Activated naive CD8-positive, alpha-beta T cell treated with anti-CD3 and anti-CD28 coated beads, Interleukin-2, amount 10 ng/mL, durations not matched to agents 7 days and 5 days (primary cell): ENCODE measurements at regions of chr6 and their contacts with region 1.

Region 1: GRCh38 chr6:32952817-32953739 is at the start of gene HLA-DMA:
- DNase-seq: peak; percentile 65
- ATAC-seq: peak; percentile 93
- H3K4me3 Mint-ChIP-seq: peak within 1 kb of the TSS; percentile 66
- H3K27ac Mint-ChIP-seq: peak within 1 kb of the TSS; percentile 62
- H3K4me1 Mint-ChIP-seq: peaks cover 50% of the 10 kb centered on the region
- H3K27me3 Mint-ChIP-seq: no peaks in the 10 kb centered on the region
- total RNA-seq, gene HLA-DMA: 32.1 to 36.1 TPM

Region 2: GRCh38 chr6:32070814-32071543 is 882.1 kb before region 1 on chr6:
- POLR2A ChIA-PET with region 1: no interaction called
- DNase-seq: no peak
- ATAC-seq: no peak
- H3K4me3 Mint-ChIP-seq: no peak overlapping the region
- H3K27ac Mint-ChIP-seq: no peak overlapping the region
- H3K4me1 Mint-ChIP-seq: no peaks in the 10 kb centered on the region
- H3K27me3 Mint-ChIP-seq: no peaks in the 10 kb centered on the region

Region 3: GRCh38 chr6:32853541-32854375 is 99.3 kb before region 1 on chr6 and contains the starts of genes PSMB9 and TAP1:
- POLR2A ChIA-PET with region 1: no interaction called
- DNase-seq: peak; percentile 96
- ATAC-seq: peak; percentile 86
- H3K4me3 Mint-ChIP-seq: peak within 1 kb of the TSS; percentile 98
- H3K27ac Mint-ChIP-seq: peak within 1 kb of the TSS; percentile 100
- H3K4me1 Mint-ChIP-seq: peaks cover 54% of the 10 kb centered on the region
- H3K27me3 Mint-ChIP-seq: no peaks in the 10 kb centered on the region
- total RNA-seq, gene PSMB9: 353 to 356 TPM
- total RNA-seq, gene TAP1: 315 to 323 TPM

Region 4: DNA sequence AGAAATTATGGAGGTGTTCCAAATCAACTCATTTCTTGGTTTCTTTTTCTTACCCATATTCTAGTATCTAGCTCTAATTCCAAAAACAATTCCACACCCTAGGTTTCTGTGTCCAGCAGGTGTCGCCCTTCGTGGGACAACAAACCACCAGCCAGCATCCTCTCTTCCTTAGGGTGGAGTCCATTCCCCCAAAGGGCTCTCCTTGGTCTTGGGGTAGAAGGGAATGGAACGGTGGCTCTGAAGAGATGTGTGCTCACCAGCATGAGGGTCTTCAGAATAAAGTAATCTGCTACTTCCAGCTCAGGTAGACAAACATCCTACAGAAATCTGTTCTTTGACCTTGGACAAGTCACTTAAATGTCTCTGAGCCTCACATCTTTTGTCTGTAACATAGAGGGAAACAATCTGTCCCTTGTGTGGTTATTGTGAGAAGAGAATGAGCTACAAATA is 19.4 kb before region 1 on chr6:
- POLR2A ChIA-PET with region 1: interaction called, 21 read pairs
- DNase-seq: peak; percentile 72
- ATAC-seq: peak; percentile 54
- H3K4me3 Mint-ChIP-seq: peak overlapping the region; percentile 26
- H3K27ac Mint-ChIP-seq: peak overlapping the region; percentile 44
- H3K4me1 Mint-ChIP-seq: peaks cover 24% of the 10 kb centered on the region
- H3K27me3 Mint-ChIP-seq: peaks cover under 1% of the 10 kb centered on the region

Region 5: DNA sequence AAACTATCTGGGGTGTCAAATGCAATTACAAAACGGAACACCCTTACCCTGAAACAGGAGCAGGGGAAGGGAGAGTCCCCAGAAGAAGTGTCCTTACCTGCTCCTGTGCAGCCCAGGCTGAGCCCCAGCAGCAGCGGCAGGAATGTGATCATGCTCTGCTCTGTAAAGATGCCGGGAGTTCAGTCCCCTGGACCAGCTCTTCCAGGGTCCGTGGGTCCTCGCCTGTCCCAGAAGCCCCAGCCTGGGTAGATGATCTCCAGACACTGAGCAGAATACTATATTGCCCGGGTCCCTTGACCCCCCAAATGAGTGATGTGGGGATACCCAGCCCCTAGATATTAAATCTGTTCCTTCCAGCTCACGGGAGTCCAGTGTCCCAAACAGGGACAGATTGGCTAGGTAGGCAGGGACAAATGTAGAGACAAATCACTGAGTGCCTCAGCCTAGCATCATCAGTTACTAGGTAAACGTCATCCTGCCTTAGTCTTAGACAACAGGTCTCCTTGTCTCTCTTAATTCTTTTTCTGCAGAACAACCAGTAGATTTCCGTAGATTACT is 12.3 kb before region 1 on chr6 and contains the start of gene HLA-DMB:
- POLR2A ChIA-PET with region 1: interaction called, 16 read pairs
- DNase-seq: peak; percentile 52
- ATAC-seq: peak; percentile 72
- H3K4me3 Mint-ChIP-seq: peak within 1 kb of the TSS; percentile 90
- H3K27ac Mint-ChIP-seq: peak within 1 kb of the TSS; percentile 95
- H3K4me1 Mint-ChIP-seq: peaks cover 69% of the 10 kb centered on the region
- H3K27me3 Mint-ChIP-seq: no peaks in the 10 kb centered on the region
- total RNA-seq, gene HLA-DMB: 14.0 to 14.7 TPM

Region 6: DNA sequence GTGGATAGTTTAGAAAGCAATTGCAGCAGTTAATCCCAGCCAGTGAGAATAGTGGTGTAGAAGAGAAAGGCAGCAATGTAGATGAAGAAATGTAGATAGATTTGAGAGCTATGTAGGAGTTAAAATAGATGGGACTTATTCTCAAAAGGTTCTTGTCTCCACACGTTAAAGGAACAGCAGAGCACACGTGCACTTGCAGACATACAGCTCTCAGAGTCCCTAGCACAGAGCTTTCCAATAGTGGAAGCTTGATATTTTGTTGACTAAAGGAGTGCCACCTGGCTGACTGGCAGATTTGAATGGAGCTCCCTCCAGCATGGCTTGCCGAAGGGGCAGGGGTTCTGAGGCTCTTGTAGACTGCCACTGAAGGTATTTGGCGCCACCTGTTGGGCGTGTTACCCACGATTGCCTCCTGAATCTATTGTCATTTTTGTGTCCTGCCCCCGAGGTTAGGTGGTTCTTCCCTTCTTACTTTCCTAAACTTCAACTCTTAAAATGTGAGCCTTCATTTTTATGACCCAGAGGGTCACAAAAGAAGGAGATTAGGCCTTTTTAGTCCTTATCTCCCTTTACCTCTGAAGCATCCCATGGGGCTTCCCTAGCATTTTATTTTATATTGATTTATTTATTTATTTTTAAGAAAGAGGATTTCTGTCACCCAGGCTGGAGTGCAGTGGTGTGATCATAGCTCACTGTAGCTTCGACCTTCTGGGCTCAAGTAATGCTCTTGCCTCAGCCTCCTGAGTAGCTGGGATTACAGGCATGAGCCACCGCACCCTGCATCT is 31.7 kb after region 1 on chr6:
- POLR2A ChIA-PET with region 1: interaction called, 11 read pairs
- DNase-seq: peak; percentile 87
- ATAC-seq: peak; percentile 77
- H3K4me3 Mint-ChIP-seq: no peak overlapping the region
- H3K27ac Mint-ChIP-seq: peak overlapping the region; percentile 68
- H3K4me1 Mint-ChIP-seq: peaks cover 35% of the 10 kb centered on the region
- H3K27me3 Mint-ChIP-seq: no peaks in the 10 kb centered on the region